ENCODE measurements at regions of chr6 and their contacts with region 1.

Region 1: GRCh38 chr6:109382576-109383437 is 540 bp upstream of the CD164 start:
- DNase-seq: peak; percentile 81 to 98 (median 88)

Region 2: GRCh38 chr6:108558372-108559096 is 824.3 kb before region 1 on chr6:
- intact Hi-C with region 1: loop called (anchors 5 kb)
- DNase-seq: peak; percentile 96 to 100 (median 98)

Region 3: GRCh38 chr6:109095027-109095834 is 287.6 kb before region 1 on chr6 and contains the start of gene CEP57L1:
- intact Hi-C with region 1: loop called (anchors 2 kb)
- DNase-seq: peak; percentile 93 to 99 (median 95)

Region 4: GRCh38 chr6:109236115-109237076 is 146.4 kb before region 1 on chr6:
- intact Hi-C with region 1: loop called (anchors 5 kb)
- DNase-seq: peak in 6 of 10 donors; percentile 12 to 90 (median 42)

Region 5: GRCh38 chr6:109440331-109441068 is 57.7 kb after region 1 on chr6 and contains the starts of genes PPIL6 and SMPD2:
- intact Hi-C with region 1: loop called (anchors 10 kb)
- DNase-seq: peak; percentile 70 to 97 (median 81)

Region 6: DNA sequence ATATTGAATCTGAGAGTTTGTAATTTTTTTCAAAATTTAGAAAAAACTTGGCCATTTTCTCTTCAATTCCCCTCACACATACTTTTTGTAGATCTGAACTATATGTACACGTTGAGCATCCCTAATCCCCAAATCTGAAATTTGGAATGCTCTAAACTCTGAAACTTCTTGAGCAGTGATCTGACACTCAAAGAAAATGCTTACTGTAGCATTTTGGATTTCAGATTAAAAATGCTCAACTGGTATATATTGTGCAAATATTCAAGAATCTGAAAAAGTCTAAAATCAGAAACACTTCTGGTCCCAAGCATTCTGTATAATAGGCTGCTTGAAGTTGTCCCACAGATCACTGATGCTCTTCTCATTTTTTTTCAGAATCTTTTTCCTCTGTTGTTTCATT is 179.0 kb after region 1 on chr6:
- intact Hi-C with region 1: no loop called
- DNase-seq: no peak

Measured in posterior cingulate gyrus (tissue), 11 donors.